ENCODE measurements at regions of chr12 and their contacts with region 1.

Region 1: DNA sequence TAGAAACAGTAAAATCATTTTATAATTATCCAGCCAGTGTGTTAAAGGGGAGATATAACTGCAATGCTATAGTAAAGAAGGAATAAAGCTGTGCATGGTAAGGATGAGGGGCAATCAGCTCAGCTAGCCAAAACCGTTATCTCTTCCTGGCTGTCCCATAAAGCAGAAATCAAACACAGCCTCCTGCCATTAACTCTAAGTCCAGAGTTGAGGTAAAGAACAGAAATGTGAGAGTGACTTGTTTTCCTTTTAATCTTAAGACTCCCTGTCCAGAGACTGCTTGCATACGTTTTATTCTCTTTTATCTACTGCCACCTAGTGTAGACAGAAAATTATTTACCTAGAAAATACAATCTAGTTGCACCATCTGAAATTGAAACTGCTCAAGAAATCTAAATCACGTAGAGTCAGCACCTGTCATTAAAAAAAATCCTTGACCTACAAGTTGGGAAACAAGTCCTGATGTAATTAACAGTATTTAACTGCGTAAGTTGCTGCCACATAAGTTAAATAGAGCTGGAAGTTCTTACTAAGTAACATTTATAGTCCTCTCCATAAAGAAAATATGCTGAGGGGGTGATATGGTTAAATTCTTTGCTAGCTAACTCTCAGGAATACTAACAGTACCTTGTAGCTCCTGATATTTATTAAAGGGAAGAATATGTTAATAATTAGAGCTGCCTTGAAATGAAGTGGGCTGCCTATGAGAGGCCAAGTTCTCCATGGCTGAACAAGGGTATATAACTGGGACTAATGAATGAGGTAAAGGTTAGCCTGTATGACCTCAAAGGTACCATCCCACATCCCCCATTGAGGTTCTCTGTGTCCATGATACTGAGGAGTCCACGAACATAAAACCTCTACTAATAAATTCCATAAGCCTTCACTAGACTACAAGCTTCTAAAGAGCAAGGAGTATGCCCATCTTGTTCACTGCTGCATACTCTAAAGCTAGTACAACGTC is 62.7 kb downstream of the GALNT4 start:
- DNase-seq: no peak
- H3K4me3 ChIP-seq: peak overlapping the region in 2 of 4 donors; percentile 6 to 25
- H3K27ac ChIP-seq: peak overlapping the region; percentile 20 to 60 (median 48)
- H3K4me1 ChIP-seq: peaks cover 0 to 16% (median 11%) of the 10 kb centered on the region in 4 donors
- H3K27me3 ChIP-seq: no peaks in the 10 kb centered on the region
- CTCF ChIP-seq: peak; percentile 33 to 75 (median 49)
- EP300 ChIP-seq: no peak
- POLR2A ChIP-seq: no peak

Region 2: GRCh38 chr12:89019408-89020120 is 442.4 kb before region 1 on chr12:
- intact Hi-C with region 1: loop called (anchors 1 kb)
- DNase-seq: peak; percentile 88
- H3K4me3 ChIP-seq: peak overlapping the region in 2 of 4 donors; percentile 30 to 31
- H3K27ac ChIP-seq: no peak overlapping the region
- H3K4me1 ChIP-seq: peaks cover 0 to 7% (median 0%) of the 10 kb centered on the region in 4 donors
- H3K27me3 ChIP-seq: no peaks in the 10 kb centered on the region
- CTCF ChIP-seq: peak; percentile 78 to 82 (median 80)
- EP300 ChIP-seq: no peak
- POLR2A ChIP-seq: no peak

Region 3: GRCh38 chr12:89051065-89051677 is 410.8 kb before region 1 on chr12:
- intact Hi-C with region 1: loop called (anchors 1 kb)
- DNase-seq: no peak
- H3K4me3 ChIP-seq: no peak overlapping the region
- H3K27ac ChIP-seq: no peak overlapping the region
- H3K4me1 ChIP-seq: no peaks in the 10 kb centered on the region
- H3K27me3 ChIP-seq: no peaks in the 10 kb centered on the region
- CTCF ChIP-seq: peak; percentile 60 to 79 (median 71)
- EP300 ChIP-seq: no peak
- POLR2A ChIP-seq: no peak